ENCODE measurements at regions of chr5 and their contacts with region 1.

Region 1: DNA sequence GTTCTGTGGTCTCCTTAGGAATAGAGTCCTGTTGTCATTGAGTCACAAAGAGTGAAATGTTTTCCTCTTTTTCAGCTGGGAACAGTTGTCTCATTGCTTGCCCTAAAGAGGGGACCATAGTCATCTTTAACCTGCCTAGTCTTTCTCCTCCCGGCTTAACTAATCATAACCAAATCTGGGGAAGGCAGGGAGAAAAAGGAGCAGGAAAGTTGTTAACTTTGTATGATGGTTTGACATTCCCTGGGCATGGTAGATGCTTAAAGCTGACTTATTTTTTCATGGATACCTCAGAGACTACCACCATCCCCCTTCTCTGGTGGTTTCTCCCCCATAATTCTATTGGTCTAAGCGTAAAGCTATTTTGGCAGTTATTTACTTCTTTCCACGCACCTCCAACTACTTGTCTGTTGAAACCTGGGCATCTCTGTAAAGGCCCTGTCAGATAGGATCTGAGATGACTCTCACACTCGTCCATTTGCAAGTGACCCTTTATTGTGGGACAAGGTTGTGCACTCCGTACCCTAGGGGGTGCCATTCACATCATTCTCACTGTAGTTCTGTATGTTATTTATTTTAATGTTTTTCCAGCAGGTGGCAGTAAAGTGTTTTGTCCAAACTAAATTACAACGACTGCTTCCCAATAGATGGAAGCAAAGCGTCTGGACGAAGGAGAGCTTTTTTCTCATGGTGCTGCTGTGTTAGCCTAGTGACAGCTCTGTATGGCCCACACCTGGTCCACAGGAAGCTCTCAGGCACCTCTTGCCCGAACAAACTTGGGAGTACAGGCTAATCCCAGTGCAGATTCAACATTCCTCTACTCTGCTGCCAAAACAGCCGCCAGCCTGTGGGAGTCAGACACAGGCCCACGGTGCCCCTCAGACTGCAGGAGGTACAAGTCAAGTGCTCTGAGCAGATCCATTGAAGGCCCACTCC is 3.0 kb upstream of the FAM13B start:
- DNase-seq: peak; percentile 47
- ATAC-seq: peak; percentile 28 to 45

Region 2: GRCh38 chr5:138067945-138068344 is 32.1 kb after region 1 on chr5:
- intact Hi-C with region 1: loop called in 1 of 2 experiments (anchors 1 kb)
- DNase-seq: no peak
- ATAC-seq: no peak

Region 3: GRCh38 chr5:138138949-138139780 is 103.3 kb after region 1 on chr5 and contains the start of gene NME5:
- intact Hi-C with region 1: loop called in 1 of 2 experiments (anchors 10 kb)
- DNase-seq: peak; percentile 77
- ATAC-seq: peak; percentile 89 to 93
- total RNA-seq, gene NME5: 1.9 to 2.7 TPM

Region 4: DNA sequence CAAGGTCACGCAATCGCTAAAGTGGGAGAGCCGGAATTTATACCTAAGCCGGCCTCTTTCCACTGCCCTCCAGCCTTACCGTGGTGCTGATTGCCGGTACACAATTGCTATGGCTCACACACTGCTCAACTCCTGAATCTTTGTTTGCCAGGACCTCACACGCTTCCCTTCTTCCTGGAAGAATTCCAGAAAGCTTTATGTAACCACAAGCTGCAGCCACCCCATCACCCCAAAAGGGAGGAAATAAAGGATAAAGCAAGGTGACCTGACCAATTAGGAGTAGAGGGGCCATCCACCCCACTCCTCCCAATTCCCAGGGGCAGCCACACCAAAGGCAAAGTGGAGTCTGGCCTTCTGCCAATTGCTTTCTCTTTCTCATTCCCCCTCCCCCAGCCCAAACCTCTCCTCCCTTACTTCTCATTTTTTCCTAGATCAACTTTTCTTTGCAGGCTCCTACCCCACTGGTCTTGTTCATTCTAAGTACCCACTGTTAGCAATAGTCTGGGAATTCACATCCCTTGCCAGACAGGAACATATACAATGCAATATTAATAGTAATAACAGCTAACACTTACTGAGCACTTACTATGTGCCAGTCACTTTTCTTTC is 195.2 kb after region 1 on chr5:
- intact Hi-C with region 1: no loop called
- DNase-seq: no peak
- ATAC-seq: peak; percentile 60 to 68